ENCODE measurements at regions of chr1 and their contacts with region 1.

Region 1: GRCh38 chr1:62783723-62784508 is at the start of gene ATG4C:
- DNase-seq: peak; percentile 72 to 97 (median 96)
- ATAC-seq: peak; percentile 96
- H3K4me3 ChIP-seq: peak within 1 kb of the TSS; percentile 94
- H3K4me3 Mint-ChIP-seq: peak within 1 kb of the TSS in 1 of 10 donors; percentile 14
- H3K27ac ChIP-seq: peak within 1 kb of the TSS; percentile 87
- H3K27ac Mint-ChIP-seq: no peak within 1 kb of the TSS
- H3K4me1 ChIP-seq: peaks cover 6 to 7% of the 10 kb centered on the region in 2 donors
- H3K4me1 Mint-ChIP-seq: peaks cover 9 to 21% (median 20%) of the 10 kb centered on the region in 7 donors
- H3K27me3 ChIP-seq: peaks cover 0 to 6% of the 10 kb centered on the region in 2 donors
- H3K27me3 Mint-ChIP-seq: peaks cover 0 to 16% (median 3%) of the 10 kb centered on the region in 5 donors
- total RNA-seq, gene ATG4C: 6.8 to 16.5 (median 11.5) TPM

Region 2: GRCh38 chr1:61724813-61725694 is 1058.9 kb before region 1 on chr1 and contains the start of gene TM2D1:
- CTCF ChIA-PET with region 1: no interaction called
- POLR2A ChIA-PET with region 1: no interaction called
- intact Hi-C with region 1: loop called (anchors 1 to 10 kb)
- DNase-seq: peak; percentile 72 to 89 (median 81)
- ATAC-seq: peak; percentile 98
- H3K4me3 ChIP-seq: peak within 1 kb of the TSS; percentile 96
- H3K4me3 Mint-ChIP-seq: peak within 1 kb of the TSS; percentile 86 to 99 (median 96)
- H3K27ac ChIP-seq: peak within 1 kb of the TSS; percentile 92
- H3K27ac Mint-ChIP-seq: peak within 1 kb of the TSS; percentile 94 to 99 (median 97)
- H3K4me1 ChIP-seq: peaks cover 13 to 17% of the 10 kb centered on the region in 2 donors
- H3K4me1 Mint-ChIP-seq: peaks cover 16 to 44% (median 39%) of the 10 kb centered on the region in 7 donors
- H3K27me3 ChIP-seq: no peaks in the 10 kb centered on the region
- H3K27me3 Mint-ChIP-seq: no peaks in the 10 kb centered on the region
- total RNA-seq, gene TM2D1: 26.8 to 57.6 (median 41.1) TPM

Region 3: DNA sequence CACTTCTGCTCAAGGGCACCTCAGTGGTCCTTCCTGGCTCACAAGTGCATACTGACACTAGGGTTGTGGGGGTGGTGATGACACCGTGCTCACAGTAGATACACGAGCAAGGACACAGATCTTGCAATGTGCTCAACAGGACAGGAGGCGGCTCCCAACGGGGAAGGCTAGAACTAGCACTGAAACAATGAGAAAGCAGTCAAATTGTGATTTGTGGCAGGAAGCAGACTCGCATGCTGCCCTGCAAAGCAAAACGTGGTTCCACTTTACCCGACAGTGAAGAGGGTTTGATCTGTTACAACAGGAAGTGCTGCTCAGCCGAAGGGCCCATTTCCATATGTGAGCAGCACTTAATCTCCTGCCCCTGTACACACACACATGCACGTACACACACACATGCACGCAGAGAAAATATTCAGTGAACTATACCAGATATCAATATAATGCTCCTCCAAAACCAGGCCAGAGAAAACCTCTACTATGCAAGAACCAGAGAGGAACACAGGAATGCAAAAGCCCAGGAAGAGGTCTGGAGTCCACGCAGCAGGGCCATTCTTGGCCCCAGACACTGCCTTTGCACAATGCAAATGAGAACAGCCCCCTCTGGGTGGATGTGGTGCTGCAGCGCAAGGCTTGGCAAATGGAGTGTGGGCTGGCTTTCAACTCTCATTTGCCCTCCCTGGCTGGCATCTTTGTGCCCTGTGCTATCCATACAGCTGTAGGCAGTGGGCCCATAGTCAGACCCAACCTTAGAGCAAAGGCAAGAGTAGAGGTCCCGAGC is 511.8 kb before region 1 on chr1:
- CTCF ChIA-PET with region 1: no interaction called
- POLR2A ChIA-PET with region 1: no interaction called
- intact Hi-C with region 1: loop called in 1 of 2 experiments (anchors 1 kb)
- DNase-seq: peak; percentile 19 to 85 (median 73)
- ATAC-seq: peak; percentile 82
- H3K4me3 ChIP-seq: peak overlapping the region; percentile 25
- H3K4me3 Mint-ChIP-seq: peak overlapping the region; percentile 37 to 80 (median 70)
- H3K27ac ChIP-seq: peak overlapping the region; percentile 27
- H3K27ac Mint-ChIP-seq: peak overlapping the region; percentile 85 to 97 (median 95)
- H3K4me1 ChIP-seq: peaks cover 6 to 19% of the 10 kb centered on the region in 2 donors
- H3K4me1 Mint-ChIP-seq: peaks cover 25 to 42% (median 34%) of the 10 kb centered on the region in 7 donors
- H3K27me3 ChIP-seq: no peaks in the 10 kb centered on the region
- H3K27me3 Mint-ChIP-seq: no peaks in the 10 kb centered on the region

Region 4: GRCh38 chr1:62687903-62688686 is 95.8 kb before region 1 on chr1 and contains the start of gene DOCK7:
- CTCF ChIA-PET with region 1: no interaction called
- POLR2A ChIA-PET with region 1: interaction called, 4 read pairs
- intact Hi-C with region 1: loop called (anchors 1 to 5 kb)
- DNase-seq: peak; percentile 25 to 63 (median 51)
- ATAC-seq: peak; percentile 76
- H3K4me3 ChIP-seq: peak within 1 kb of the TSS; percentile 84
- H3K4me3 Mint-ChIP-seq: peak within 1 kb of the TSS; percentile 89 to 99 (median 96)
- H3K27ac ChIP-seq: peak within 1 kb of the TSS; percentile 65
- H3K27ac Mint-ChIP-seq: peak within 1 kb of the TSS; percentile 80 to 98 (median 95)
- H3K4me1 ChIP-seq: peaks cover 0 to 8% of the 10 kb centered on the region in 2 donors
- H3K4me1 Mint-ChIP-seq: peaks cover 8 to 32% (median 16%) of the 10 kb centered on the region in 7 donors
- H3K27me3 ChIP-seq: no peaks in the 10 kb centered on the region
- H3K27me3 Mint-ChIP-seq: peaks cover 0 to 10% (median 3%) of the 10 kb centered on the region in 5 donors
- total RNA-seq, gene DOCK7: 5.1 to 15.0 (median 12.4) TPM

Region 5: DNA sequence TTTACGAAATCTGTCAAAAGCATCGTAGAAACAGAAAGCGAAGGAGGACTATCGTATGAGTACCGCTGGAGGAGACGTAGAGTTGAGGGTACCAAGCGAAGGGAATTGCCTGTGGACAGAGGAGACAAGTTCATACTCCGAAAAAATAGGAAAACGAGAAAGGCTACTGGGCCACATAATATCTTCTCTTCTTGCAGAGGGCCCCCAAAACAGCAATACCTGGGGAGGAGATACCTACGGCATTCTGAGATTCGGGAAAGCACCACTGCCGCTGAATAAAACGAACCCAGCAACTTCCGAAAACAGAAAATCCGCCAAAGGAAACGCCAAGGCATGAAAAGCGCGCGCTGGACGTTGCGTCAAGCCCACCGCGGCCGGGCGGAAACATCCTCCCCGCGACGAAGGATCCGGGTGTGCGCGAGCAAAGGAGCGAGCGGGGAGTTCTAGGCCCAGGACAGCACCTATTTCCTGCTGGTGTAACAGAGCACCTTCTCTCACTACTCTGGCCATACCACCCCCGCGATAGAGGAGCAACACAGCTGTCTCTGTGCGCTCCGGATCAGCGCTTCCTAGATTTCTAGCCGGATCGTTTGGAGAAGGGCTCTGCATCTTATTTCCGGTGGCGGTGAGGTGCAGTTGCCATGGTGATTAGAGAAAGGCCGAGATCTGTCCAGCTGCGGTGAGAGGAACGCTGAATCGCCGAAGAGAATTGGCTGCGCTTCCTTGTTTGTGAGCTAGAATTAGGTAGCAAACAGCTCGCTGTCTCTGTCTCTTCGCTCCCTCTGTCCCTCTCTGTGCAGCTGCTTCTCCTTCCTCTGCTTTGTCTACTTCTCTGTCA is 739.2 kb after region 1 on chr1 and contains the starts of genes EFCAB7 and ITGB3BP:
- CTCF ChIA-PET with region 1: no interaction called
- POLR2A ChIA-PET with region 1: no interaction called
- intact Hi-C with region 1: loop called (anchors 1 kb)
- DNase-seq: peak; percentile 73 to 86 (median 82)
- ATAC-seq: peak; percentile 92
- H3K4me3 ChIP-seq: peak within 1 kb of the TSS; percentile 83
- H3K4me3 Mint-ChIP-seq: peak within 1 kb of the TSS; percentile 82 to 100 (median 98)
- H3K27ac ChIP-seq: peak within 1 kb of the TSS; percentile 78
- H3K27ac Mint-ChIP-seq: peak within 1 kb of the TSS; percentile 93 to 99 (median 97)
- H3K4me1 ChIP-seq: peaks cover 7 to 13% of the 10 kb centered on the region in 2 donors
- H3K4me1 Mint-ChIP-seq: peaks cover 12 to 47% (median 36%) of the 10 kb centered on the region in 7 donors
- H3K27me3 ChIP-seq: no peaks in the 10 kb centered on the region
- H3K27me3 Mint-ChIP-seq: peaks cover 0 to 2% (median 0%) of the 10 kb centered on the region in 5 donors
- total RNA-seq, gene EFCAB7: 4.1 to 13.5 (median 9.2) TPM
- total RNA-seq, gene ITGB3BP: 16.5 to 52.6 (median 32.9) TPM

Measured in naive thymus-derived CD4-positive, alpha-beta T cell (primary cell).